ENCODE measurements at regions of chr12 and their contacts with region 1.

Region 1: DNA sequence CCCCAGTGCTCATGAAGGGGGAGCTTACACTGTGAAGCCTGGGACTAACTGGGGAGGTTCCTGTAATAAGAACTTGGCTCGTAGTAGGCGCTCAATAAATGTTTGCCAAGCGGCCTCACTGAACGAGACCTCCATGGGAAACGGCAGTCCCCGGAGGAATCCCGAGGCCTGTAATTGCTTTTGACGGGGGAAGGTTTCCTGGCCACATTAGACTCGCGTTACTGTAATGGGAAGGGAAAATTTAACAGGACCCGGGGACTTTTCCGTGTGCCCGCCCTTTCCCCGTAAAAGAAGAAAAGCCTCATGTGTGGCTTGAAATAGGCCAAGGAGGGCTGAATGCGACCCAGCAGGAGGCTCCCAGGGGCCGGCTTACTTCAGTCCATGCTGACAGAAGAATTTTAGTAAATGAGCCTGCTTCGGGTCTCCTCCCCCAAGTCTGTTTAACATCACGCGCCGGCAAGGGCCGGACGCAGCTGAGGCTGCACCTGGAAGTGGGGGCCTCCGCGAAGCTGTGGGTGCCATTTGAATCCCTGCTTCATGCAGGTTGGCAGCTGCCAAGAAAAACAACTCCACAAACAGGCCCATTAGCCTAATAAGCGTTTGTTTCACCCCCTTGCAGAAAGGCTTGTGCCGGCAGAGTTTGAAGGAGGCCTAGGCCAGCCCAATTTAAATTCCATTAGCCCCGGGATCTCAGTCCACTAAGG is 39.8 kb upstream of the PWP1 start:
- DNase-seq: peak; percentile 75
- ATAC-seq: peak; percentile 86
- H3K4me3 Mint-ChIP-seq: peak overlapping the region; percentile 42
- H3K27ac Mint-ChIP-seq: peak overlapping the region; percentile 99
- H3K4me1 Mint-ChIP-seq: peaks cover 26% of the 10 kb centered on the region
- H3K27me3 Mint-ChIP-seq: no peaks in the 10 kb centered on the region
- CTCF ChIP-seq: no peak

Region 2: GRCh38 chr12:107635139-107635538 is 10.6 kb before region 1 on chr12:
- CTCF ChIA-PET with region 1: interaction called, 3 read pairs
- POLR2A ChIA-PET with region 1: interaction called, 10 read pairs
- DNase-seq: peak; percentile 57
- ATAC-seq: peak; percentile 90
- H3K4me3 Mint-ChIP-seq: peak overlapping the region; percentile 49
- H3K27ac Mint-ChIP-seq: peak overlapping the region; percentile 99
- H3K4me1 Mint-ChIP-seq: peaks cover 53% of the 10 kb centered on the region
- H3K27me3 Mint-ChIP-seq: peaks cover 4% of the 10 kb centered on the region; the same call in 1 of the 2 replicates
- CTCF ChIP-seq: no peak